IMR-90 (cell line): ENCODE measurements at regions of chr6 and their contacts with region 1.

Region 1: GRCh38 chr6:137944793-137945498 is 77.9 kb downstream of the TNFAIP3 start:
- DNase-seq: peak; percentile 52
- ATAC-seq: peak; percentile 93
- H3K4me3 ChIP-seq: no peak overlapping the region
- H3K27ac ChIP-seq: no peak overlapping the region
- H3K4me1 ChIP-seq: no peaks in the 10 kb centered on the region
- H3K27me3 ChIP-seq: peaks cover 6% of the 10 kb centered on the region; the same call in 1 of the 2 replicates
- CTCF ChIP-seq: peak; percentile 83
- POLR2A ChIP-seq: no peak
- RAD21 ChIP-seq: peak; percentile 82

Region 2: GRCh38 chr6:137707590-137708360 is 237.2 kb before region 1 on chr6:
- CTCF ChIA-PET with region 1: interaction called, 11 read pairs
- POLR2A ChIA-PET with region 1: no interaction called
- dilution Hi-C with region 1: no loop called
- in situ Hi-C with region 1: no loop called
- intact Hi-C with region 1: loop called (anchors 1 kb)
- DNase-seq: peak; percentile 86
- ATAC-seq: peak; percentile 78
- H3K4me3 ChIP-seq: no peak overlapping the region; the same call in 1 of the 2 replicates
- H3K27ac ChIP-seq: no peak overlapping the region
- H3K4me1 ChIP-seq: no peaks in the 10 kb centered on the region; the same call in 1 of the 2 replicates
- H3K27me3 ChIP-seq: no peaks in the 10 kb centered on the region
- CTCF ChIP-seq: peak; percentile 89
- POLR2A ChIP-seq: no peak
- RAD21 ChIP-seq: peak; percentile 89

Region 3: DNA sequence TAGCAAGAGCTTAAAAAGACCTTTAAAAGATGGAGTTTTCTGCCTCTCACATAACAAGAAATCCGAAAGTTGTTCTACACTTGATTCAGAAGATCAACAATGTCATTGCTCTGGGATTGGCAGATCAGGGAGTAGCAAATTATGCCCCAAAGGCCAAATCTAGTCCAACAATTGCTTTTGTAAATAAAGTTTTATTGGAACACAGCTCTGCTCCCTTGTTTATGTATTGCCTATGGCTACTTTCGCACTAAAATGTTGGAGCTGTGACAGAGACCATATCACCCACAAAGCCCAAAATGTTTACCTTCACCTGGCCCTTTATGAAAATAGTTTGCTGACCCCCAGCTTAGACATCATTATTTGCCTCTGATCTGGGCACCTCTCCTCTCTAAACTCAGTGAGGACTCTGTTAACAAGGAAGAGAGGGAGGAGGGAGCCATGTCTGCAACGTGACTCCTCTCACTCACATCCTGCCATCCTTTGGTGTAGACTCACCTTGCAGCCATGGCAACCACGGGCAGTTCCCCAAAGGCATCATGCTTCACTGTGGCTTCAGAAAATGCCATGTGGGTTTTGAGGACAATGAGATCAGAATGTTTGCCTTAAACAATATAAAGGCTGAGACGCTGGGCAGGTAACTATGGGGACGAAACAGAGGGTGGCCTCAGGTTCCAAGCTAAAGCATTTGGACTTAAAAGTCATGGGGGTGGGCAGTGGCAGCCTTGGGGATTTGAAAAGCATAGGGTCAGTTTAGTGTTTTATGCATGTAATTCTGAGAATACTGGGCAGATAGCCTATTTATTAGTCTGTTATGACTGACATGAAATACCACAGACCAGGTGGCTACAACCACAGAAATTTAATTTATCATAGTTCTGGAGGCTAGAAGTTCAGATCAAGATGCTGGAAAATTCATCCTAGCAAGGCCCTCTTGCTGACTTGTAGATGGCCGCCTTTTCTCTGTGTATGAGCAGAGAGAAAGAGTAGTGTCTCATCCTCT is 227.6 kb before region 1 on chr6:
- CTCF ChIA-PET with region 1: interaction called, 4 read pairs
- POLR2A ChIA-PET with region 1: no interaction called
- dilution Hi-C with region 1: no loop called
- in situ Hi-C with region 1: loop called (anchors 5 kb)
- intact Hi-C with region 1: no loop called
- DNase-seq: no peak
- ATAC-seq: no peak
- H3K4me3 ChIP-seq: no peak overlapping the region
- H3K27ac ChIP-seq: no peak overlapping the region
- H3K4me1 ChIP-seq: peaks cover 2% of the 10 kb centered on the region; the same call in 1 of the 2 replicates
- H3K27me3 ChIP-seq: no peaks in the 10 kb centered on the region
- CTCF ChIP-seq: no peak
- POLR2A ChIP-seq: no peak
- RAD21 ChIP-seq: no peak

Region 4: GRCh38 chr6:137744877-137745276 is 200.1 kb before region 1 on chr6:
- CTCF ChIA-PET with region 1: no interaction called
- POLR2A ChIA-PET with region 1: no interaction called
- dilution Hi-C with region 1: no loop called
- in situ Hi-C with region 1: no loop called
- intact Hi-C with region 1: no loop called
- DNase-seq: no peak
- ATAC-seq: no peak
- H3K4me3 ChIP-seq: no peak overlapping the region
- H3K27ac ChIP-seq: no peak overlapping the region
- H3K4me1 ChIP-seq: no peaks in the 10 kb centered on the region
- H3K27me3 ChIP-seq: no peaks in the 10 kb centered on the region; the same call in 1 of the 2 replicates
- CTCF ChIP-seq: no peak
- POLR2A ChIP-seq: no peak
- RAD21 ChIP-seq: no peak

Region 5: DNA sequence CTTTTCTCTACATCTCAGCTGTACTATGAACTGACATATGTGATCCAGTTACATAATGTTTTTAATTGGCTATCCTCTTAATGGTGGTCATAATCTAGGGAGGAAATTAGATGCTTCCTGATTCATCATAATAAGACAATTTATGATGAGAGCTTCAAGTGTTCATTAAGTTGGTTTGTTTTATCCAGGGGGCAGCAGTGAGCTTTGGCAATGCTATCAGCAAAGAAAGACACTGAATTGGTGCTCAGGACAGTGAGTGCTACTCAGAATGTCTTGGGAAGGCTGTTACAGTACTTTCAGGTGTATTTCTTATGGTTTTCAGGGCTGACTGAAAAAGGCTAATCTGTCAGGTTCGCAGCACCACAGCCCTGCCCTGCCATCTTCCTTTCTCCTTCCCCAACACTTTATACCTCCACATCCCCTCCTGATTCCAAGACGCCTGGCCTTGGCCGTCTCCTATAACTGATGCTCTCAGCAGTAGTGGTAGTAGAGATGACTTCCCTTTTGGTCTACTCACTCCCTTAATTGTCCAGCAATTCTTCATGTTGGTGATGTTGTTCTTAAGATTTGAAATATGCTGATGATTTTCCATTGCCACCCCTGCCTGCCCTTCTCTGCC is 144.9 kb before region 1 on chr6:
- CTCF ChIA-PET with region 1: interaction called, 4 read pairs
- POLR2A ChIA-PET with region 1: no interaction called
- dilution Hi-C with region 1: no loop called
- in situ Hi-C with region 1: no loop called
- intact Hi-C with region 1: loop called (anchors 2 kb)
- DNase-seq: peak; percentile 67
- ATAC-seq: peak; percentile 68
- H3K4me3 ChIP-seq: no peak overlapping the region
- H3K27ac ChIP-seq: no peak overlapping the region
- H3K4me1 ChIP-seq: no peaks in the 10 kb centered on the region; the same call in 1 of the 2 replicates
- H3K27me3 ChIP-seq: no peaks in the 10 kb centered on the region
- CTCF ChIP-seq: peak; percentile 59
- POLR2A ChIP-seq: no peak
- RAD21 ChIP-seq: peak; percentile 64

Region 6: DNA sequence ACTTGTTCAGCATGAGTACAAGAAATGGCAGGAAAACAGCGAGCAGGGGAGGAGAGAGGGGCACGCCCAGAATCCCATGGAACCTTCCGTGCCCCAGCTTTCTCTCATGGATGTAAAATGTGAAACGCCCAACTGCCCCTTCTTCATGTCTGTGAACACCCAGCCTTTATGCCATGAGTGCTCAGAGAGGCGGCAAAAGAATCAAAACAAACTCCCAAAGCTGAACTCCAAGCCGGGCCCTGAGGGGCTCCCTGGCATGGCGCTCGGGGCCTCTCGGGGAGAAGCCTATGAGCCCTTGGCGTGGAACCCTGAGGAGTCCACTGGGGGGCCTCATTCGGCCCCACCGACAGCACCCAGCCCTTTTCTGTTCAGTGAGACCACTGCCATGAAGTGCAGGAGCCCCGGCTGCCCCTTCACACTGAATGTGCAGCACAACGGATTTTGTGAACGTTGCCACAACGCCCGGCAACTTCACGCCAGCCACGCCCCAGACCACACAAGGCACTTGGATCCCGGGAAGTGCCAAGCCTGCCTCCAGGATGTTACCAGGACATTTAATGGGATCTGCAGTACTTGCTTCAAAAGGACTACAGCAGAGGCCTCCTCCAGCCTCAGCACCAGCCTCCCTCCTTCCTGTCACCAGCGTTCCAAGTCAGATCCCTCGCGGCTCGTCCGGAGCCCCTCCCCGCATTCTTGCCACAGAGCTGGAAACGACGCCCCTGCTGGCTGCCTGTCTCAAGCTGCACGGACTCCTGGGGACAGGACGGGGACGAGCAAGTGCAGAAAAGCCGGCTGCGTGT is 66.3 kb before region 1 on chr6:
- CTCF ChIA-PET with region 1: interaction called, 3 read pairs
- POLR2A ChIA-PET with region 1: no interaction called
- dilution Hi-C with region 1: no loop called
- in situ Hi-C with region 1: loop called (anchors 5 kb)
- intact Hi-C with region 1: no loop called
- DNase-seq: no peak
- ATAC-seq: no peak
- H3K4me3 ChIP-seq: no peak overlapping the region
- H3K27ac ChIP-seq: no peak overlapping the region
- H3K4me1 ChIP-seq: peaks cover 6% of the 10 kb centered on the region
- H3K27me3 ChIP-seq: no peaks in the 10 kb centered on the region
- CTCF ChIP-seq: no peak
- POLR2A ChIP-seq: no peak
- RAD21 ChIP-seq: no peak

Region 7: DNA sequence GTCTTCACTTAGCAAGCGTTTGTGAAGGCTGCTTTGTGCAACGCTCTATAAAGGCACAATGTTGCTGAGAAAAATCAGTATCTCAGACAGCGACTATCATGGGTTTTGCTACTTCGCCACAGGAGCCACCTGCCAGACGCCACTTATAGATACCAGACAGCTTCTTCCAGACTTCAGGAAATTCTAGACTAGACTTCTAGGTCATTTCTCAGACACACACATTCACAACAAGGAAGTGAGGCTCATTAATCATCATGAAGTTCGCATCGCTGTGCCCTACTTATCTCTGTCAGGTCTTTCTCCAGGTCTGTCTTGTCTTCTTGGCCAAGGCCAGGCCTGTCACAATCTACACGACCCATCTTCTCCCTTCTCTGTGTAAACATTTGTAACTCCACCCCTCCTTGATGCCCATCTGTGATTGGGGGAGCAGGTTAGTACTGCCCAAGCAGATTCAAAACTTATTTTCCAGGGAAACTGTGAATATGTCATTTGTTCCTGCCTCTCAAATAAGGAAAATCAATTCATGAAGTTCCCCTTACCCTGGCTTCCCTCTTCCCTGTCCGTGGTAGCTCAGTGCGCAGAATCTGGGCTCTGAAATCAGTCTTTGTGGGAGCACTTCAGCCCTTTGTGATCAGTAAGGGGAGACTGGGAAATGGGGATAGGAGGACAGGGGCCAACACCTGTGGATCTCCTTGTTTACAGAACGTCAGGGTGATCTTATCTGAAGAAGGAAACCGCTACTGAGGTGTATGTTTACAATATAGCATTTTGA is 37.7 kb after region 1 on chr6:
- CTCF ChIA-PET with region 1: no interaction called
- POLR2A ChIA-PET with region 1: no interaction called
- dilution Hi-C with region 1: no loop called
- in situ Hi-C with region 1: no loop called
- intact Hi-C with region 1: no loop called
- DNase-seq: no peak
- ATAC-seq: no peak
- H3K4me3 ChIP-seq: no peak overlapping the region
- H3K27ac ChIP-seq: no peak overlapping the region
- H3K4me1 ChIP-seq: no peaks in the 10 kb centered on the region
- H3K27me3 ChIP-seq: peaks cover 10% of the 10 kb centered on the region
- CTCF ChIP-seq: no peak
- POLR2A ChIP-seq: no peak
- RAD21 ChIP-seq: no peak